Endothelial cell of umbilical vein (primary cell): ENCODE measurements at regions of chr15 and their contacts with region 1.

Region 1: GRCh38 chr15:91055548-91056331 is 33.3 kb upstream of the VPS33B start:
- DNase-seq: peak; percentile 47
- H3K4me3 ChIP-seq: no peak overlapping the region
- H3K27ac ChIP-seq: no peak overlapping the region
- H3K4me1 ChIP-seq: no peaks in the 10 kb centered on the region
- H3K27me3 ChIP-seq: peaks cover 17 to 31% of the 10 kb centered on the region in 2 experiments
- CTCF ChIP-seq: peak; percentile 59 to 73
- POLR2A ChIP-seq: no peak

Region 2: GRCh38 chr15:91007266-91007665 is 48.5 kb before region 1 on chr15:
- CTCF ChIA-PET with region 1: no interaction called
- POLR2A ChIA-PET with region 1: no interaction called
- dilution Hi-C with region 1: no loop called
- intact Hi-C with region 1: no loop called
- DNase-seq: no peak
- H3K4me3 ChIP-seq: no peak overlapping the region
- H3K27ac ChIP-seq: no peak overlapping the region
- H3K4me1 ChIP-seq: no peaks in the 10 kb centered on the region
- H3K27me3 ChIP-seq: no peaks in the 10 kb centered on the region
- CTCF ChIP-seq: no peak
- POLR2A ChIP-seq: no peak

Region 3: GRCh38 chr15:91224755-91225380 is 169.1 kb after region 1 on chr15:
- CTCF ChIA-PET with region 1: interaction called, 22 read pairs
- POLR2A ChIA-PET with region 1: no interaction called
- dilution Hi-C with region 1: no loop called
- intact Hi-C with region 1: loop called (anchors 1 kb)
- DNase-seq: peak; percentile 54
- H3K4me3 ChIP-seq: no peak overlapping the region
- H3K27ac ChIP-seq: no peak overlapping the region
- H3K4me1 ChIP-seq: no peaks in the 10 kb centered on the region
- H3K27me3 ChIP-seq: no peaks in the 10 kb centered on the region
- CTCF ChIP-seq: peak; percentile 58 to 59
- POLR2A ChIP-seq: no peak

Region 4: GRCh38 chr15:91246998-91247397 is 191.3 kb after region 1 on chr15:
- CTCF ChIA-PET with region 1: interaction called, 17 read pairs
- POLR2A ChIA-PET with region 1: no interaction called
- dilution Hi-C with region 1: no loop called
- intact Hi-C with region 1: no loop called
- DNase-seq: no peak
- H3K4me3 ChIP-seq: no peak overlapping the region
- H3K27ac ChIP-seq: no peak overlapping the region
- H3K4me1 ChIP-seq: no peaks in the 10 kb centered on the region
- H3K27me3 ChIP-seq: no peaks in the 10 kb centered on the region
- CTCF ChIP-seq: no peak
- POLR2A ChIP-seq: no peak